A549 (cell line): ENCODE measurements at regions of chr10 and their contacts with region 1.

Region 1: GRCh38 chr10:77837240-77837924 is 89.2 kb downstream of the DLG5 start:
- DNase-seq: peak in 1 of 2 experiments; percentile 47
- ATAC-seq: peak; percentile 59 to 88; a peak in 4 of 6 replicates
- H3K4me3 ChIP-seq: no peak overlapping the region
- H3K27ac ChIP-seq: no peak overlapping the region
- H3K4me1 ChIP-seq: no peaks in the 10 kb centered on the region
- CTCF ChIP-seq: no peak
- EP300 ChIP-seq: no peak
- POLR2A ChIP-seq: no peak
- RAD21 ChIP-seq: peak in 1 of 2 experiments; percentile 36; a peak in 1 of 5 replicates

Region 2: DNA sequence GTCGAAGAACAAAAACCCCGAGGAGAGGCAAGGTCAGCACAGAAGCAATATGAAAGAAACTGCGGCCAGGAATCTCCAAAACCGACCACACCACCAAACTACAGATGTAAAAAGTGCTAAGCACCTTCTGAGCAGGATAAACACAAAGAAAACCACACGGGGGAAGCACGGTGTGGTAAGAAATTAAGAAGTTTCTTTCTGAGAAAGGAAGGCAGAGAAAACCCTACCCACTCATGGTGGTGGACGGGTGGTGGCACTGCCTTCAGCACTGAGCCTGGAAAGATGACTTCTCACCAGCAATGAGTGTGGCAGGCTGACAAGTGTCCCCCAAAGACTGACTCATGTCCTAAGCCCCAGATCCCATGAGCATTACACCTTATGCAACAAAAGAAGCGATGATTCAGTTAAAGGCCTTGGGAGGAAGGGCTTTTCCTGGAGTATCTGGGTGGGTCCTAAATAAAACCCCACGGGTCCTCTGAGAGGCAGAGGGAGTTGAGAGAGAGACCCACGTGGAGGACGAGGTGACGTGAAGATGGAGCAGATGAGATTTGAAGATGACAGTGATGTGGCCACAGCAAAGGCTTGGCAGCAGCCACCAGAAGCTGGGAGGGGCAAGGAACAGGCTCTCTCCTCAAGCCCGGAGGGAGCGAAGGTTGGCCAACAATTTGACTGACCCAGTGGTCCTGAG is 35.8 kb before region 1 on chr10:
- CTCF ChIA-PET with region 1: no interaction called
- POLR2A ChIA-PET with region 1: no interaction called
- DNase-seq: no peak
- ATAC-seq: no peak
- H3K4me3 ChIP-seq: no peak overlapping the region
- H3K27ac ChIP-seq: no peak overlapping the region
- H3K4me1 ChIP-seq: no peaks in the 10 kb centered on the region
- CTCF ChIP-seq: no peak
- EP300 ChIP-seq: no peak
- POLR2A ChIP-seq: no peak
- RAD21 ChIP-seq: no peak

Region 3: GRCh38 chr10:77820349-77820748 is 17.0 kb before region 1 on chr10:
- CTCF ChIA-PET with region 1: interaction called, 14 read pairs
- POLR2A ChIA-PET with region 1: no interaction called
- DNase-seq: no peak
- ATAC-seq: no peak
- H3K4me3 ChIP-seq: no peak overlapping the region
- H3K27ac ChIP-seq: no peak overlapping the region
- H3K4me1 ChIP-seq: no peaks in the 10 kb centered on the region
- CTCF ChIP-seq: no peak
- EP300 ChIP-seq: no peak
- POLR2A ChIP-seq: no peak
- RAD21 ChIP-seq: no peak

Region 4: GRCh38 chr10:77853294-77853693 is 15.9 kb after region 1 on chr10:
- CTCF ChIA-PET with region 1: no interaction called
- POLR2A ChIA-PET with region 1: no interaction called
- DNase-seq: no peak
- ATAC-seq: no peak
- H3K4me3 ChIP-seq: no peak overlapping the region
- H3K27ac ChIP-seq: no peak overlapping the region
- H3K4me1 ChIP-seq: peaks cover 15% of the 10 kb centered on the region
- CTCF ChIP-seq: no peak
- EP300 ChIP-seq: no peak
- POLR2A ChIP-seq: no peak
- RAD21 ChIP-seq: no peak